ENCODE measurements at regions of chr1 and their contacts with region 1.

Region 1: GRCh38 chr1:93078986-93079654 is at the start of gene MTF2:
- DNase-seq: peak; percentile 97
- H3K4me3 Mint-ChIP-seq: peak within 1 kb of the TSS; percentile 85
- H3K27ac Mint-ChIP-seq: peak within 1 kb of the TSS; percentile 88
- H3K4me1 Mint-ChIP-seq: peaks cover 28% of the 10 kb centered on the region
- H3K27me3 Mint-ChIP-seq: no peaks in the 10 kb centered on the region
- total RNA-seq, gene MTF2: 53.6 to 55.1 TPM

Region 2: GRCh38 chr1:93021539-93022134 is 57.5 kb before region 1 on chr1:
- CTCF ChIA-PET with region 1: interaction called, 10 read pairs
- POLR2A ChIA-PET with region 1: no interaction called
- intact Hi-C with region 1: loop called (anchors 5 kb)
- DNase-seq: no peak
- H3K4me3 Mint-ChIP-seq: no peak overlapping the region
- H3K27ac Mint-ChIP-seq: no peak overlapping the region
- H3K4me1 Mint-ChIP-seq: no peaks in the 10 kb centered on the region
- H3K27me3 Mint-ChIP-seq: peaks cover 6% of the 10 kb centered on the region

Region 3: GRCh38 chr1:93095804-93096585 is 16.9 kb after region 1 on chr1:
- CTCF ChIA-PET with region 1: interaction called, 12 read pairs
- POLR2A ChIA-PET with region 1: no interaction called
- intact Hi-C with region 1: no loop called
- DNase-seq: no peak
- H3K4me3 Mint-ChIP-seq: no peak overlapping the region
- H3K27ac Mint-ChIP-seq: no peak overlapping the region
- H3K4me1 Mint-ChIP-seq: peaks cover 51% of the 10 kb centered on the region
- H3K27me3 Mint-ChIP-seq: no peaks in the 10 kb centered on the region

Region 4: DNA sequence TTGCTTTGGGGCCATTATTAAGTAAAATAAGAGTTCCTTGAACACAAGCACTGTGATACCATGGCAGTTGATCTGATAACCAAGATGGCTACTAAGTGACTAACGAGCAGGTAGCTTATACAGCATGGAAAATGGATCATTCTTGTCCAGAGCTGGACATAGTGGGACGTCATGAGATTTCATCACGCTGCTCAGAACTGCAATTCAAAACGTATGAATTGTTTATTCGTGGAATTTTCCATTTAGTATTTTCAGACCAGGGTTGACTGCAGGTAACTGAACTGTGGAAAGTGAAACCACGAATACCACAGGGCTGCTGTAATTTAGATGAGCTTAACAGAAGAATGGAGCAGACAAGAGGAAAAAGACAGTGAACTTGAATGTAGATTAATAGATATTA is 140.3 kb after region 1 on chr1:
- CTCF ChIA-PET with region 1: interaction called, 6 read pairs
- POLR2A ChIA-PET with region 1: no interaction called
- intact Hi-C with region 1: loop called (anchors 2 kb)
- DNase-seq: peak; percentile 30
- H3K4me3 Mint-ChIP-seq: peak overlapping the region; percentile 61
- H3K27ac Mint-ChIP-seq: peak overlapping the region; percentile 70
- H3K4me1 Mint-ChIP-seq: peaks cover 26% of the 10 kb centered on the region
- H3K27me3 Mint-ChIP-seq: no peaks in the 10 kb centered on the region

Region 5: DNA sequence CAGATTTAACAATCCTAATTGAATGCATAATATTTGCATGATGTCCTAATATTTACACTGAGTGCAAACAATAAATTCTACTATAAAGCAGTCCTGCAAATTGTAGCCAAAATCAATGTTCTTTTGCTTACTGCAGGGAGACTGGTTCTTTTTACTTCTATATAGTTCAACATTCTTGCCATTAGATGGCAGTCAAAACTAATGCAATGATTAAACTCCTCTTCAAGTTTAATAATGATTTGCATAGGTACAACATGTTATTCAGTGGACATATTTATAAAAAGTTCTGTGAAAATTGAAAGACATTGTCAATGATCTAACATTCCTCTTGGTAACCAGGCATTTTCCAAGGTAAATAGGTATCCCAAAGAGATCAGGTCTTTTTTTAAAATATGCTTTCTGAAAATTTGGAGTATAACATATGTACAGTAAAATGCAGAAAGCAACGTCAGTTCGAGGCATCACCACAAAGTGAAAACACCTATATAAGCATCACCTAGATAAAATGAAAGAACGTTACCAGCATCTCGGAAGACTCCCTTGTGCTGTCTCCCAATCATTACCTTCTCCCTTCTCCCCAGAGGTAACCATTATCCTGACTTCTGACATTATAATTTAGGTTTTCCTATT is 359.0 kb after region 1 on chr1:
- CTCF ChIA-PET with region 1: interaction called, 3 read pairs
- POLR2A ChIA-PET with region 1: no interaction called
- intact Hi-C with region 1: loop called (anchors 5 kb)
- DNase-seq: no peak
- H3K4me3 Mint-ChIP-seq: no peak overlapping the region
- H3K27ac Mint-ChIP-seq: no peak overlapping the region
- H3K4me1 Mint-ChIP-seq: no peaks in the 10 kb centered on the region
- H3K27me3 Mint-ChIP-seq: peaks cover 5% of the 10 kb centered on the region